PC-3 (cell line): ENCODE measurements at regions of chr2 and their contacts with region 1.

Region 1: DNA sequence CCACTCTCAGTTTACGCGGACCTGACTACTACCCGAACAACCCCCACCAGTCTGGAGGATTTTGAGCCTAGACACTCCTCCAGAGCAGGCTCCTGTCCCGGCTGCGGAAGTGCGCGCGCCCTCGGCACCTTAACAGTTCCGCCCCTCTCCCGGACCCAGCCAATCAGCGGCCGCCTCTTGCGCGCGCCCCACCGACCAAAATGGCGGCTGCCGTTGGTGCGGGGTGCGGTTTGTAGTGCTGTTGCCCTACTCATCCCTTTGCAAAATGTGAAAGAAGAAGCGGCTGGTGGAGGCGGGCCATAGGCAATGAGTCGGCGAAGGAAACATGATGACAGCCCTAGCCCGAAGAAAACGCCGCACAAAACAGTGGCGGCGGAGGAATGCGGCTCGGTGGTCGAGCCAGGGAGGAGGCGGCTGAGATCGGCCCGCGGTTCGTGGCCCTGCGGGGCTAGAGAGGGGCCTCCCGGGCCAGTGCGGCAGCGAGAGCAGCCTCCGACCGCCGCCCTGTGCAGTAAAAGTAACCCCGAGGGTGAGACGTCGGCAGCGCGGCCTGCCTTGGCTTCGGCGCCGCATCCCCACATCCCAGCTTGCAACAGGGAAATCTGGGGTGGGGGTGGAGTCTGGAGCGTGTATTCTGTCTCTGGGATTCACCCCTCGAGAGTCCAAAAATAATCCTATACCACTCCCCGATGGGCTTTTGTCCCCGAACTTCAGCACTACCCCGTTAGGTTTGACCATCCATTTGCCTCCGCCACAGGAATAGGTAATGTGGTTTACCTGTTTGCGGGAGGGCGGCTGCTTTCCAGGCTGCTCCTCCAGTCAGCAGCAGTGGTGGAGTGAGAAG is at the start of gene ETAA1:
- DNase-seq: peak; percentile 89
- ATAC-seq: peak; percentile 87
- H3K4me3 ChIP-seq: peak within 1 kb of the TSS; percentile 89
- H3K27ac ChIP-seq: peak within 1 kb of the TSS; percentile 93
- H3K4me1 ChIP-seq: peaks cover 56% of the 10 kb centered on the region
- H3K27me3 ChIP-seq: no peaks in the 10 kb centered on the region
- CTCF ChIP-seq: no peak
- total RNA-seq, gene ETAA1: 12.1 and 14.0 TPM in 2 replicates

Region 2: DNA sequence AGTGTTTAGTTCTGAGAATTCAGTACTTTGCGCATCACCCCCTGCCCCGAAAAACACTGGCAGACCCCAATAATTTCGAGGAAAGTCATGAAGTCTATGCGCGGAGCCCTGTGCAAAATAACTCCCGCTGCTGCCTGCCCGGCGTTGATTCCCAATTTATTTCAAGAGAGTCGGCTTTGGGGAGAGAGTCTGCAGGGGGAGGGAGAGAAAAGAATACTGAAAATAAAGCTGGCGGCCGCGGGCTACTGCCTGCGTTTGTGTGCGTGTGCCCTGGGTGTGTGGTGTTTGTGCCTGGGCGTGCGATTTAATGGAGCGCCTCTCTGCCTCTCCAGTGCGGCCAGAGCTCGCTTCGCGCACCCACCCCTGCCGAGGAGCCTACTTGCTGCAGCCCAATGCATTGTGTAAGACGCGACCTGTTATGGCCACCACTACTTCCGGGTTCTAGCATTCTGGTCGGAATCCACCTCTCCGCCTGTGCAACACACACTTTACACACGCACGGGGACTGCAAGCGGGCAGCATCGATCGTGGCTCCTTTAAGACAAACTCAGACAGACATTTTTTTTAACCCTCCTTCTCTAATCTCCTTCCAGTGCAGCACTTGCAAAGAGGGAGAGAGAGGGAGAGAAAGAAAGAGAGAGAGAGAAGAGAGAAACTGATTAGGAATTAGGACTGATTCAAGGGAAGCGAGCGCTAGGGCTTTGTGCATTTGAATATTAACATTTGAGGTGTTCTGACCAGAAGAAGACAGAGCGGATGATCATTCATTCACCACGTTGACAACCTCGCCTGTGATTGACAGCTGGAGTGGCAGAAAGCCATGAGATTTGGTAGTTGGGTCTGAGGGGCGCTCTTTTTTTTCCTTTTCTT is 962.5 kb before region 1 on chr2 and contains the start of gene MEIS1:
- CTCF ChIA-PET with region 1: no interaction called
- POLR2A ChIA-PET with region 1: no interaction called
- intact Hi-C with region 1: loop called (anchors 5 kb)
- DNase-seq: peak; percentile 90
- ATAC-seq: peak; percentile 77
- H3K4me3 ChIP-seq: peak within 1 kb of the TSS; percentile 91
- H3K27ac ChIP-seq: peak within 1 kb of the TSS; percentile 55
- H3K4me1 ChIP-seq: no peaks in the 10 kb centered on the region
- H3K27me3 ChIP-seq: no peaks in the 10 kb centered on the region
- CTCF ChIP-seq: no peak
- total RNA-seq, gene MEIS1: 4.1 and 5.9 TPM in 2 replicates

Region 3: DNA sequence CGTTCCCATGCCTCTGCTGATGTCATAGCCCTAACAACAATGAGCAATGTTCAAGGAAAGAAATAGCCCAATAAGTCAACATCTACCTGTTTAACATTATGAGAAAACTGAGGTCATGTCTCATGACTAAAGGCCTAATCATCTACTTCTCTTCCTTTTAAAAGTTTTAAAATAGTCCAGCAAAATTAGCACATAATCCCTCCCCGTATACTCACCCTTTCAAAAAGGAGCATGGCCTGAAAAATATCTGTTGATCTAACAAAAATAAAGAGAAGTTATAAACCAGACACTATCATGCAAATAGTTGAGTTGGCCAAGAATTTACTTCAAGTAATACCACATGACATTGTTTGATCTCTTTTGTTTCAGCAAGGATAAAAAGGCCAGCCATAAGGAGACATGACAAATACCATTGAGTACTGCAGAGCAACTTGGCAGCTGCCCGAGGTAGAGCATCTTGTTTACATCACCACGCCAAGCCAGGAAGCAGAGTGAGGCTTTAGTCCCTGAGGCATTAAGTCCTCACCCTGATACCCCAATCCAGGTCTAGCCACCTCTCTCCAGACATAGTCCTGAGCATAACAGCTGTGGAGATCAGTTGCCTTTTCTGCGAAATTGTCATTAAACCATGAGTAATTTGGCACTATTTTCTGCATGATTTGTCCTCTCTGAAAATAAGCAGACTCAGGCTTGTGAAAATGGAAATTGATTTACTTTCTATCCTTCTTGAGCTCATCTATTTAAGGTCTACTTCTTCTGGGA is 137.6 kb before region 1 on chr2:
- CTCF ChIA-PET with region 1: no interaction called
- POLR2A ChIA-PET with region 1: no interaction called
- intact Hi-C with region 1: loop called (anchors 10 kb)
- DNase-seq: peak; percentile 86
- ATAC-seq: peak; percentile 66
- H3K4me3 ChIP-seq: no peak overlapping the region
- H3K27ac ChIP-seq: peak overlapping the region; percentile 97
- H3K4me1 ChIP-seq: peaks cover 56% of the 10 kb centered on the region
- H3K27me3 ChIP-seq: no peaks in the 10 kb centered on the region
- CTCF ChIP-seq: no peak

Region 4: DNA sequence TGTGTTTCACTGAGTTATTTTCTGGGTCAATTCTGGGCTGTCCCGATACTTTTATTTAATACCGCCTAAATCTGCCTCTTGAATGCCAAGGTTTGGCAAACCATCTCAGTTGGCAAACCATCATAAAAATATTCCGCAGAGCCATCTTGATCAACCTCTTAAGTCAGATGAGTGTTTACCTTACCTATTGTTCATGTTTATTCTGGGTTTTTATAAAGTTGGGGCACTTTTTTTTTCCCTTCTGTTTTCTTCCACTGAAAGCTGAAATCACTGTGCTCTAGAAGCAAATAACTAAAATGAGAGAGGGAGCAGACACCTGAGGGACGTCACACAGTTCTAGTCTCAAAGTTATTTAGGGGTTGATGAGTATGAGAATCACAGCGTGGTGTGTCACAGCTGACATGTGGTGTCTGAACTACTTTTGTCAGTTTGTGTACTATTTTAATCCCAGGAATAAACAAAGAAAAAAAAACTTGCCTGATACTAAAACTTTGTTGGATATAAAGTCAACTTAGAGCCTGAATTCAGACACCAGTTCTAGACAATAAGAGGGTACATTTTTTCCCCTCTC is 48.4 kb after region 1 on chr2:
- CTCF ChIA-PET with region 1: no interaction called
- POLR2A ChIA-PET with region 1: no interaction called
- intact Hi-C with region 1: loop called (anchors 1 kb)
- DNase-seq: peak; percentile 61
- ATAC-seq: peak; percentile 28
- H3K4me3 ChIP-seq: no peak overlapping the region
- H3K27ac ChIP-seq: peak overlapping the region; percentile 52
- H3K4me1 ChIP-seq: peaks cover 32% of the 10 kb centered on the region
- H3K27me3 ChIP-seq: no peaks in the 10 kb centered on the region
- CTCF ChIP-seq: no peak

Region 5: DNA sequence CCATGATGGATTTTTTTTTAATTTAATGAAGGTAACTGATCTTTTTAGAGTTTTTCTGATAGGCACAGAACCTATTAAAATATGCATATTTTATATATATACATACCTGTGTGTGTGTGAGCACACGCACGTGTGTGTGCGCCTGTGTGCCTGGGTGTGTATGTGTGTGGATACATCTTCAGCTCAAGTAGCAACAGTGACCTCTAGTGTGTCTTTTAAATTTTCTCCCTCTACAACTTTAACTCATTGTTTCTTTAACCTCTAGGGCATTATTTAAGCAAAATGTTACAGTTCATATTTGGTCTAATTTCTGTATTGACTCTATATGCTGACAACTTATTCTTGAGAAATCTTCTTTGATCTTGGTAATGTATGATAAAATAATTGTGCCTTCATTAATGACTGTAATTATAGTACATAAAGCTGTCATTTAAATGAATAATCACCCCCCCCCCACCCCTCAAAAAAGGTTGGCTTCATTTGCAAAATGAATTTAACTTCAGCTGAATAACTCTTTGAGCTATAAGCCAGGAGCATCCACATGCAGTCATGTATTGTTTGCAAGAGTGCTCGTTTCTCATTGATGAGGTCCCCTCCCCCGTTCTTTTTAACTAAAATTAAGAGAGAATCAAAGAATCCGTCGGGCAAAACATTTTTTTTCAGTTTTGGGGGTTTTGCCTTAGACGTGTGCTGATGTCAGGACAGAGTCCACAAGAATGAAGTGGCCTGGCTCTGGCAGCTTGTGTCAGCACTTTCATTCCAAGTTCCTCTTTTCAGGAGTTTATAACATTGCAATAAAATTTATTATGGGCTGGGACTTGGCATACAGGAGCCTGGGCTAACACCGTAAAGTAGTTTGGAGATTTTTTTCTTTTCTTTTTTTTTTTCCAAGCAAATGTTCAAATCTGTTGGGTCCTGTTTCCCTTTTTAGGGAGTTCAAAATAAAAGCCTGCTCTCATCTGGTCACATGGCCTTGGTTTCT is 79.7 kb after region 1 on chr2:
- CTCF ChIA-PET with region 1: interaction called, 7 read pairs
- POLR2A ChIA-PET with region 1: no interaction called
- intact Hi-C with region 1: loop called (anchors 5 kb)
- DNase-seq: peak; percentile 76
- ATAC-seq: peak; percentile 90
- H3K4me3 ChIP-seq: no peak overlapping the region
- H3K27ac ChIP-seq: peak overlapping the region; percentile 5
- H3K4me1 ChIP-seq: peaks cover 12% of the 10 kb centered on the region
- H3K27me3 ChIP-seq: no peaks in the 10 kb centered on the region
- CTCF ChIP-seq: peak; percentile 81

Region 6: DNA sequence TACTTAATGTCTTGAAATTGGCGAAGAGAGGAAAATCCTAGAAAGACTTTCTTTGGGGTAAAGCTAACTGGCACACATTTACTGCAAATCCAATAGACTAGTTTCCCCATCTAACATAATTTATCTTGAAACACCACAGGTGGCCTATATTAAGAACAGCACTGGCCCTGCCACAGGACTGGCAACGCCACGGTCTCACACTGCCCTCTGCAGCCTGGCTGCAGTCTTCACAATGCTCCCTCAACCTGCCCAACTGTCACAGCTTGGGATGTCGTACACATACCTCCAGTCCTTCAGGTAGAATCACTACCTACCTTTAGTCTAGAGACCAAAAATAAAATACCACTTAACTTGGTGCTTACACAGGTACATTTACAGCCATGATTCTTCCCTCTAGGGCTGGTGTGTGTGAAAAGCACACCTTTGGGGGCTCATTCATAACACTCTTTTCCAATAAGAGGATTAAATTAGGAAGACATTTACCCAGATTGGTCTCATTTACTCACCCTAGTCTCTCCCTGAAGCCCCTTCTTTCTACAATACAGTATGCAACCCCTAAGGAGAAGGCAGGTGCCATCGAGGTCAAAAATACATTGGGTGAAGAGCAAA is 443.2 kb after region 1 on chr2:
- CTCF ChIA-PET with region 1: no interaction called
- POLR2A ChIA-PET with region 1: no interaction called
- intact Hi-C with region 1: loop called (anchors 10 kb)
- DNase-seq: peak; percentile 84
- ATAC-seq: peak; percentile 99
- H3K4me3 ChIP-seq: no peak overlapping the region
- H3K27ac ChIP-seq: no peak overlapping the region
- H3K4me1 ChIP-seq: peaks cover 9% of the 10 kb centered on the region
- H3K27me3 ChIP-seq: no peaks in the 10 kb centered on the region
- CTCF ChIP-seq: peak; percentile 97